ENCODE measurements at regions of chr15 and their contacts with region 1.

Region 1: GRCh38 chr15:79896637-79897379 is at the start of gene MTHFS:
- DNase-seq: peak; percentile 80
- ATAC-seq: peak; percentile 81
- H3K4me3 Mint-ChIP-seq: peak within 1 kb of the TSS; percentile 90
- H3K27ac Mint-ChIP-seq: peak within 1 kb of the TSS; percentile 98
- H3K4me1 Mint-ChIP-seq: peaks cover 43% of the 10 kb centered on the region
- H3K27me3 Mint-ChIP-seq: no peaks in the 10 kb centered on the region
- total RNA-seq, gene MTHFS: 17.0 to 22.1 TPM

Region 2: GRCh38 chr15:79863886-79864285 is 32.9 kb before region 1 on chr15:
- CTCF ChIA-PET with region 1: no interaction called
- DNase-seq: no peak
- ATAC-seq: no peak
- H3K4me3 Mint-ChIP-seq: no peak overlapping the region
- H3K27ac Mint-ChIP-seq: no peak overlapping the region
- H3K4me1 Mint-ChIP-seq: no peaks in the 10 kb centered on the region
- H3K27me3 Mint-ChIP-seq: no peaks in the 10 kb centered on the region

Region 3: GRCh38 chr15:79923515-79924395 is 26.9 kb after region 1 on chr15:
- CTCF ChIA-PET with region 1: interaction called, 11 read pairs
- DNase-seq: peak; percentile 99
- ATAC-seq: peak; percentile 96
- H3K4me3 Mint-ChIP-seq: peak overlapping the region; percentile 88
- H3K27ac Mint-ChIP-seq: peak overlapping the region; percentile 96
- H3K4me1 Mint-ChIP-seq: peaks cover 25% of the 10 kb centered on the region
- H3K27me3 Mint-ChIP-seq: peaks cover 4% of the 10 kb centered on the region

Region 4: DNA sequence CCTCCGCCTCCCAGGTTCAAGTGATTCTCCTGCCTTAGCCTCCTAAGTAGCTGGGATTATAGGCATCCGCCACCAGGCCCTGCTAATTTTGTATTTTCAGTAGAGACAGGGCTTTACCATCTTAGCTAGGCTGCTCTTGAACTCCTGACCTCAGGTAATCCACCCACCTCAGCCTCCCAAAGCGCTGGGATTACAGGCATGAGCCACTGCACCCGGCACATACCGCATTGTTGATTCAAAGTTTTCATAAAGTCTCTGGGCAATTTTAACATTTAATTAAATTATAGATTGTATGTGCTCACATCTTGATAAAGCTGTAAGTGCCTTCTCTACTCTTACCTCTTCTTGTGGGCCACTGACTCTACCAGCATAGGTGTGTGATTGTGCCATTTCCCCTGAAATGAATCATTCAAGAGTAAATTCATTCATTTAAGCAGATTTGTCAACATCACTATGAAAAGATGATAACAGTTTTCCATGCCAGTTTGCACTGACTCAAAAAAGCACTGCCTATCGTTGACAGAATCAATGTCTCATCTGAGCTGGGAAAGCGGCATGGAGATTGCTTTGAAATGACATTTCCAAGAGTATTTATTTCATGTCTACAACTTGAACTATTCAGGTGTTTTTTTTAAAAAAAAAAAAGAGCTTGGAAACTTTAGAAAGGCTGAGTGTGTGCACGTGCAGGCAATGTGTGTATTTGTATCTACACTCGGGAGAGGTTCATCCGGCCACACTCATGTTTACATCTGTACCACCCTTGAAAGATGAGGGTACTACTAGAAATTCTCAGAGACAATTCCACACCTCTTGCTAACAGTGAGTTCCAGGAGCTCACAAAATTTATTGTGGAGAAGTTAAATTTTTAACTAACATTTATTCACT is 70.7 kb after region 1 on chr15:
- CTCF ChIA-PET with region 1: interaction called, 10 read pairs
- DNase-seq: peak; percentile 55
- ATAC-seq: peak; percentile 43
- H3K4me3 Mint-ChIP-seq: peak overlapping the region; percentile 79
- H3K27ac Mint-ChIP-seq: peak overlapping the region; percentile 91
- H3K4me1 Mint-ChIP-seq: peaks cover 60% of the 10 kb centered on the region
- H3K27me3 Mint-ChIP-seq: no peaks in the 10 kb centered on the region

Region 5: DNA sequence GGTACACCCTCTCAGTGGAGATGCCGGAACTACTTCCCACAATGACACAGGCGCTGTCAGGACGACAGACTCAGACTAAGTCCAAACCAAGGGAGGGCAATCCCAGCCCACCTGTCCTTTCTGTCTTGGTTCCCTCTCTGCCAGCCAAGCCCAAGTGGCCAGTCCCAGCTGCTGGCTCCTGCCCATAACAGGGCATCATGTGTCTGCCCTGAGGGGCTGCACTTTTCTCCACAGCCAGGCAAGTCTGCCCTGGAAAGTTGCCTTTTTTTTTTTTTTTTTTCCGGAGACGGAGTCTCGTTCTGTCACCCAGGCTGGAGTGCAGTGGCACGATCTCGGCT is 94.2 kb after region 1 on chr15:
- CTCF ChIA-PET with region 1: interaction called, 20 read pairs
- DNase-seq: no peak
- ATAC-seq: no peak
- H3K4me3 Mint-ChIP-seq: no peak overlapping the region
- H3K27ac Mint-ChIP-seq: no peak overlapping the region
- H3K4me1 Mint-ChIP-seq: no peaks in the 10 kb centered on the region
- H3K27me3 Mint-ChIP-seq: peaks cover 3% of the 10 kb centered on the region

Measured in activated CD8-positive, alpha-beta memory T cell treated with anti-CD3 and anti-CD28 coated beads, Interleukin-2, amount 10 ng/mL, durations not matched to agents 7 days and 5 days (primary cell).